Activated naive CD4-positive, alpha-beta T cell treated with anti-CD3 and anti-CD28 coated beads for 36 hours (primary cell): ENCODE measurements at regions of chr11 and their contacts with region 1.

Region 1: DNA sequence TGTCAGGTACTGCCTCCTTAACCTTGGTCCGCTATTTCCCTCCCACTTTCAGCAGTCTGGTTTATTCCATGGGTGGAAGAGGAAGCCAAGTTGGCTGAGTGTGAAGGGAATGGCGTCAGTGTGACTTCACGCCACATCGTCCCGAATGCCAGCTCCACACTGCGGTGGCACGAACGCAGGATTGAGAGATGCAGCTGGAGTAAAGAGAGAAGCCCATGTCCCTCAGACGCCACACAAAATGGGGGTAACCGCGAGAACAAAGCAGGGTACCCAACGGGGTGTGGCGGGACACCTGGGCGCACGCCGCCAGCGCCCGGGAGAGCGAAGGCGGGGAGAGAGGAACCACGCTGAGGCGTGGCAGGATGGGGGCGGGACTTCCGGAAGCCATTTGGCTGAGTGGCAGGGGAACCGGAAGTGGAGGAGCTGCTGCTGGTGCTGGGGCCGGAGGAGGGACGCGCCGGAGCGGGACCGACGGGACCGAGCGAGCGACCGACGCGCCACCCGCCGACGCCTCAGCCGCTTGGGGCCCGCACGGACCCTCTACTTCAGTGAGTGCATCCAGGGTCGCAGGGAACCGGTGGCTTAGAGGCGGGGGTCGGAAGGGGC is at the start of gene PAFAH1B2:
- DNase-seq: peak; percentile 98
- H3K4me3 Mint-ChIP-seq: peak within 1 kb of the TSS; percentile 95
- H3K27ac Mint-ChIP-seq: peak within 1 kb of the TSS; percentile 91
- H3K4me1 Mint-ChIP-seq: peaks cover 37% of the 10 kb centered on the region
- H3K27me3 Mint-ChIP-seq: no peaks in the 10 kb centered on the region
- total RNA-seq, gene PAFAH1B2: 43.7 to 44.3 TPM

Region 2: DNA sequence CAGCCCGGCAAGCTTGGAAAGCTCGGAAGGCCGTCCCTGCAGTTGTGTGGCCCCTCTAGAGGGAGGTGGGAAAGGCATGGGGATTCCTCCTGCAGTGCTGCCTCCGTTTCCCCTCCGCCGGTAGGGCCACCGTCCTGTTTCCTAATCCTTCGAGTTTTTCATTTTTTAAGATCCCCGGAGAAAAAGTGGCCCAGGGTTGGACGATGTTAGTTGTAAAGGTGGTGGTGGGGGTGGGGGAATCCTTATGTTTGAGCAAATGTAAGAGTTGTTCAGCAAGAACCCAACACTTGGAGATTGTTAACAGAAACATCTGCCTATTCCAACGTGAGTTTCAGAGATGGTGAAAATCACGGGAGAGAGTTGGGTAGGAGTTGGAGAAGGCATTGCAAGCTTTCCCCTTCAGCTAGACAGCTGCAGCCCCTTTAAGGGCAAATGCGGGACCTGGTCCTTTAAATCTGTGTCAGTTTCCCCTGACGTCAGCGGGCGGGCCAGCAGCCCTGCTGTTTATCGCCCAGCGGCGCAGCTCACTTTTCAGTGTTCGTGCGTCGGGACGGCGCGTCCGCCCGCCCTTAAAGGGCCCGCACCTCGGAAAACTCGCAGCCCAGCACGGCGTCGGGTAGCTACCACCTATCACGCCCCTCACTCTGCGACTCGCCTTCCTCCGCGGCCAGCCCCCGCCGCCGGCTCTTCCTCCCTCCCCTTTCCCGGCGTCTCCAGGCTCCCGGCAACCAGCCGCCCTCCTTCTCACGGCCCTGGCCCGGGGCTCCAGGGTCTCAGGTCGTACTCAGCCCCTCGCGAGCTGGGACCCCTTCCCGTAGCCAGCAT is 34.4 kb after region 1 on chr11 and contains the start of gene SIDT2:
- CTCF ChIA-PET with region 1: interaction called, 6 read pairs
- intact Hi-C with region 1: loop called (anchors 1 kb)
- DNase-seq: peak; percentile 92
- H3K4me3 Mint-ChIP-seq: peak within 1 kb of the TSS; percentile 93
- H3K27ac Mint-ChIP-seq: peak within 1 kb of the TSS; percentile 79
- H3K4me1 Mint-ChIP-seq: peaks cover 28% of the 10 kb centered on the region
- H3K27me3 Mint-ChIP-seq: no peaks in the 10 kb centered on the region
- total RNA-seq, gene SIDT2: 23.9 to 25.6 TPM